ENCODE measurements at regions of chr11 and their contacts with region 1.

Region 1: GRCh38 chr11:19756675-19757475 is 44.2 kb downstream of the NAV2 start:
- DNase-seq: peak; percentile 30 to 73
- H3K4me3 ChIP-seq: peak overlapping the region in 1 of 2 donors; percentile 0
- H3K27ac ChIP-seq: peak overlapping the region; percentile 79 to 81
- H3K4me1 ChIP-seq: peaks cover 13 to 62% of the 10 kb centered on the region in 2 donors
- H3K27me3 ChIP-seq: no peaks in the 10 kb centered on the region
- CTCF ChIP-seq: no peak

Region 2: DNA sequence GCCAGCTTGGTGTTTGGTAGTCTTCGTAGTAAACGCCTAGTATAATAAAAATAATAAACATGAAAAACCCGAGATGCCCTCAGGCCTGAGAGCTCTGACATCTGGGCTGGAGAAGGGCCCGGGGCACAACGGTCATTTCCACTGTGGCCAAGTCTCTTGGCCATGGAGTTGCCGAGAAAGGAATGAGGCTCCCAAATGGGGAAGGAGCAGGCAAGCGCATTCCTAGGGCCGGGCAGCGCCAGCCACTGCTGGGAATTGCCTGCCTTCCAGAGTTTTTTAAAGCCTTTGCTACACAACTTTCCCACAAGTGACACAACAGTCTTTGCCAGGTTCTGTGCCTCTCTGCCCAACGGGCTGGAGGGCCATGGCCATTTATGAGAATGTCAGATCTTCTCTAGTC is 59.2 kb after region 1 on chr11:
- intact Hi-C with region 1: loop called (anchors 5 kb)
- DNase-seq: peak in 1 of 2 donors; percentile 74
- H3K4me3 ChIP-seq: peak overlapping the region in 1 of 2 donors; percentile 4
- H3K27ac ChIP-seq: peak overlapping the region in 1 of 2 donors; percentile 55
- H3K4me1 ChIP-seq: peaks cover 19 to 69% of the 10 kb centered on the region in 2 donors
- H3K27me3 ChIP-seq: no peaks in the 10 kb centered on the region
- CTCF ChIP-seq: no peak